MCF 10A (cell line): ENCODE measurements at regions of chr4 and their contacts with region 1.

Region 1: DNA sequence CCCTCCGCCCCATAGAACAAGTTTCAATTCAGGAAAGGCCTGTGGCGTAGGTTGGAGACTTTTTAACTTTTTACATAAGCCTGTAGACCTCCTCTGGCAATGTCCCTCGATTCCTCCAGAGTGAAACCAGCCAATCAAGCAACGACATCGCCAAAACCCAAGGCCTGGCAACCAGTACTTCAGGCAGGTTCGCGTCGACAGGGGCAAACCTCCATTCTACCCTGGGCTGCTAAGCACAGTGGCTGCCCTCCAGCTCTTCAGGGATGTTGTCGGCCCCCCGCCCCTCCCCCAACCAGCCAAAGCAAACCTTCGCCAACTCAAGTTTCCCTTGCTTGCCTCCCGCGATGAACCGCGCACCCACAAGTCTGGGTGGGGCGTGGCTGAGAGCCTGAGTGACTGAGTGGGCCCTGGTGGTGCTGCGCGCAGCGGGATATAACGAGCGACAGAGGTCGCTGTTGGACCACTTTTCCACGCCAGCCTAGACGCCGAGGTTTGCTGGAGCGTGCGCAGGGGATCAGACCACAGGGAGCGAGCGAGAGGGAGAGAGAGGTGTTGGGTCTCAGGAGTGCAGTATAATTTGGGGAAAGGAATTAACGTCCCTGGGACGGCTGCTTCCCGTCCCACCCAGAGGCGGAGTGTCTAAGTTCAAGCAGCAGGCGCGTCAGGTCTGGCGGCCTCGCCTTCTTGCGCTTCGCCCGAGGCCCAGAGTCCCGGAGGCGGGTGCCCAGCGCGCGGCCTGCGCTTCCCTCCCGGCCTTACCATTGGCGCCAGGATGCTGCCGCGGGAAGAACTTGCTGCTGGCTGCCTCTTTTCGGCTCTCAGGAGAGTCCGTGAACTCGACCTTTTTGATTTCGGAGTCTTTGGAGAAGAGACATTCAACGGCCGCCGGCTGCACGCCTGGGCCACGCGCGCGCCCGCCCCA is 9.0 kb upstream of the PITX2 start:
- DNase-seq: peak; percentile 87
- H3K4me3 Mint-ChIP-seq: peak overlapping the region; percentile 73
- H3K27ac Mint-ChIP-seq: no peak overlapping the region
- H3K4me1 Mint-ChIP-seq: peaks cover 7% of the 10 kb centered on the region
- H3K27me3 Mint-ChIP-seq: peaks cover 58% of the 10 kb centered on the region
- CTCF ChIP-seq: peak; percentile 80

Region 2: GRCh38 chr4:110959041-110959643 is 327.3 kb after region 1 on chr4:
- CTCF ChIA-PET with region 1: interaction called, 12 read pairs
- POLR2A ChIA-PET with region 1: no interaction called
- intact Hi-C with region 1: loop called (anchors 1 kb)
- DNase-seq: peak; percentile 21
- H3K4me3 Mint-ChIP-seq: no peak overlapping the region
- H3K27ac Mint-ChIP-seq: no peak overlapping the region
- H3K4me1 Mint-ChIP-seq: no peaks in the 10 kb centered on the region
- H3K27me3 Mint-ChIP-seq: peaks cover 55% of the 10 kb centered on the region
- CTCF ChIP-seq: peak; percentile 46

Region 3: GRCh38 chr4:110970642-110971041 is 338.8 kb after region 1 on chr4:
- CTCF ChIA-PET with region 1: interaction called, 4 read pairs
- POLR2A ChIA-PET with region 1: no interaction called
- intact Hi-C with region 1: loop called (anchors 5 kb)
- DNase-seq: peak; percentile 68
- H3K4me3 Mint-ChIP-seq: no peak overlapping the region
- H3K27ac Mint-ChIP-seq: no peak overlapping the region
- H3K4me1 Mint-ChIP-seq: no peaks in the 10 kb centered on the region
- H3K27me3 Mint-ChIP-seq: peaks cover 36% of the 10 kb centered on the region
- CTCF ChIP-seq: peak; percentile 42

Region 4: GRCh38 chr4:111136438-111136837 is 504.6 kb after region 1 on chr4:
- CTCF ChIA-PET with region 1: no interaction called
- POLR2A ChIA-PET with region 1: no interaction called
- intact Hi-C with region 1: loop called (anchors 10 kb)
- DNase-seq: peak; percentile 37
- H3K4me3 Mint-ChIP-seq: no peak overlapping the region
- H3K27ac Mint-ChIP-seq: no peak overlapping the region
- H3K4me1 Mint-ChIP-seq: no peaks in the 10 kb centered on the region
- H3K27me3 Mint-ChIP-seq: no peaks in the 10 kb centered on the region
- CTCF ChIP-seq: peak; percentile 34

Region 5: DNA sequence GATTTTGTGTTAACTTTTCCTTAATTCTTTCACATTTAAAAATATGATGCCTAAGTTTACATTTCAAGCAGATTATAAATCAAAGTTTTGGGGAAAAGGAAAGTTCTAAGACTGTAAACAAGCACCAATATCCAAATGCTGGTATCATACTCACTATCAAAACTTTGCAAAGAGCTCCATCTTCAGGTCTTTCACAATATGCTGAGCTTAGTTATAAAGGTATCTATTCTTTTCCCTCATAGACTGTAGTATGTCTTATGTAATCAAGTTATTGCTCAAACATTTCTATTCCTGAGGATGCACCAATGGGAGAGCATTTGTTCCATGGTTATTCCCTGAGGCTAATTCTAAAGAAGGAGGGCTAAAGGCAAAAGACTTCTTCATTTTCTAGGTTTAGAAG is 1305.5 kb after region 1 on chr4:
- CTCF ChIA-PET with region 1: no interaction called
- POLR2A ChIA-PET with region 1: no interaction called
- intact Hi-C with region 1: loop called (anchors 5 kb)
- DNase-seq: peak; percentile 69
- H3K4me3 Mint-ChIP-seq: no peak overlapping the region
- H3K27ac Mint-ChIP-seq: no peak overlapping the region
- H3K4me1 Mint-ChIP-seq: no peaks in the 10 kb centered on the region
- H3K27me3 Mint-ChIP-seq: peaks cover 55% of the 10 kb centered on the region
- CTCF ChIP-seq: peak; percentile 27